AG04449 (cell line): ENCODE measurements at regions of chr2 and their contacts with region 1.

Region 1: GRCh38 chr2:172596776-172597175 is 40.9 kb downstream of the PDK1 start:
- DNase-seq: no peak
- H3K4me3 ChIP-seq: no peak overlapping the region
- CTCF ChIP-seq: no peak

Region 2: DNA sequence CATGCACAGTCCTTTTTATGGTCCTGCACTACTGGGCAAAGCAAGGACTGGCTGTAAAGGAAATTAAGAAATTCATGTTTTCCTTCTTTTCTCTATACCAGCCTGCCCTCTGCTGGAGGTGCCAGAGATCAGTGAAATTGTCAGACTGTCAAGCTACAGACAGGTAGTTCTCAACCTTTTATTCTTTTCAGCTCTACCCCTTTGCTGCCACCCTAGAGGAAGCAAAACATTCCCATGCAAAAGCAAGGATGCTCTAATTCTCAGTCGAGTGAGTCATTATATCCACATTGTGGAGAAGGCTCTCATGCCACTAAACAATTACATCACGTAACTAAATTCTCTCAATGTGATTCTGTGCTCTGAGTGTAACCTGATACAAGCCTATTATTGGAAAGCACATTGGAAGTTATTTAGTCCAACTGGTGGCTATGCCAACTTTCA is 113.8 kb after region 1 on chr2:
- CTCF ChIA-PET with region 1: interaction called, 30 read pairs
- POLR2A ChIA-PET with region 1: no interaction called
- DNase-seq: peak; percentile 84
- H3K4me3 ChIP-seq: no peak overlapping the region
- CTCF ChIP-seq: peak; percentile 40